Ovary (tissue), 10 donors: ENCODE measurements at regions of chr6 and their contacts with region 1.

Region 1: DNA sequence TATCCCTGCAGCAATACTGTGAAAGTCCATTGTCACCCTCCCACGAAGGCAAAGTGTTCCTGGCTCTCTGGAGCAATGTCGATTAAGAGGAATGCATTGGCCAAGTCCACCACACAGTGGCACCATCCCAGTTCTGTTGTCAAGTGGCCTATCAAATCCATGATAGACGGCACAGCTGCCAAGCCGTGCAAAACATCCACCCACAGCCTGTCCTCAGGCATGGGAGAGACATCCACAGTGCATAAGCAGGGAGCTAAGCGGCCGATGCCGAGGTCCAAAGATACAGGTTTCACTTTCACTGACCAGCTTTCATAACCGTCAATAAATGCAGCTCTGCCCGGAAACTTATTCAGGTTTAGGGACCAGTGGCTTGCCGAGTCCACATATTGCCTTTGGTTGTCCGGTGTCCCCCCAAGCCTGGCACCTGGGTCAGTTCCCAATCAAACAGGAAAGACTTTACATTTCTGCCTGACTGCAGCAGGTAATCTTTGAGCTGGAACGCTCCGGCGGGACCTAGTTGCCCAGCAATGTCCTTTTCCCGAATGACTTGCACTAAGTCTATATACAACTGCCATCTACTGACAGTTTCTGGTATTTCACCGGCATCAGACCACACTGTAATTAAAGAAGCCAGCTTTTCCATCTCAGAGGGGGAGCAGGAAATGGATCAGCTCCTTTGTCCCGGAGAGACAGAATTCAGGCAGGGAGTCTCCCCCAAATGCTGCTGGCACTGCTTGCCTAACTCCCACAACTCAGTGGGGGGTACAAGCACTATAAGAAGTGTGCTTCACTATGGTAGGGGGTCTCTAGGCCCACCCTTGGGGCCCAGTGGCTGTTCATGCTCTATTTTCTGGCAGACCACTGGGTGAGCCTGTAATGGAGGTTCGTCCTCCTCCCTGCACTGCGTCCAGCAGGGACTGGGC is 6.3 kb downstream of the ZKSCAN3 start:
- DNase-seq: peak; percentile 70 to 80 (median 72)
- H3K4me3 ChIP-seq: peak overlapping the region; percentile 56
- H3K27ac ChIP-seq: peak overlapping the region; percentile 26 to 75
- H3K4me1 ChIP-seq: peaks cover 4% of the 10 kb centered on the region
- H3K27me3 ChIP-seq: no peaks in the 10 kb centered on the region
- CTCF ChIP-seq: peak; percentile 73 to 82 (median 80)
- EP300 ChIP-seq: no peak
- POLR2A ChIP-seq: no peak

Region 2: GRCh38 chr6:28136585-28137504 is 219.2 kb before region 1 on chr6:
- intact Hi-C with region 1: loop called in 3 of 4 experiments (anchors 10 kb)
- DNase-seq: peak; percentile 93 to 96 (median 95)
- H3K4me3 ChIP-seq: peak overlapping the region; percentile 74
- H3K27ac ChIP-seq: peak overlapping the region; percentile 94 to 95
- H3K4me1 ChIP-seq: peaks cover 7% of the 10 kb centered on the region
- H3K27me3 ChIP-seq: no peaks in the 10 kb centered on the region
- CTCF ChIP-seq: no peak
- EP300 ChIP-seq: no peak
- POLR2A ChIP-seq: peak; percentile 29

Region 3: GRCh38 chr6:28225056-28225834 is 130.8 kb before region 1 on chr6 and contains the start of gene ZSCAN9:
- intact Hi-C with region 1: loop called in 1 of 4 experiments (anchors 5 kb)
- DNase-seq: peak; percentile 83 to 92 (median 85)
- H3K4me3 ChIP-seq: peak within 1 kb of the TSS; percentile 89
- H3K27ac ChIP-seq: peak within 1 kb of the TSS in 1 of 2 donors; percentile 33
- H3K4me1 ChIP-seq: peaks cover 1% of the 10 kb centered on the region
- H3K27me3 ChIP-seq: no peaks in the 10 kb centered on the region
- CTCF ChIP-seq: no peak
- EP300 ChIP-seq: no peak
- POLR2A ChIP-seq: peak; percentile 20
- total RNA-seq, gene ZSCAN9: 10.0 to 17.5 (median 13.7) TPM

Region 4: GRCh38 chr6:28252009-28252975 is 103.7 kb before region 1 on chr6 and contains the start of gene ZKSCAN4:
- intact Hi-C with region 1: loop called in 2 of 4 experiments (anchors 10 kb)
- DNase-seq: peak; percentile 70 to 83 (median 76)
- H3K4me3 ChIP-seq: peak within 1 kb of the TSS; percentile 74
- H3K27ac ChIP-seq: no peak within 1 kb of the TSS
- H3K4me1 ChIP-seq: peaks cover 8% of the 10 kb centered on the region
- H3K27me3 ChIP-seq: no peaks in the 10 kb centered on the region
- CTCF ChIP-seq: no peak
- EP300 ChIP-seq: no peak
- POLR2A ChIP-seq: no peak
- total RNA-seq, gene ZKSCAN4: 1.5 to 8.0 (median 6.0) TPM

Region 5: GRCh38 chr6:28266962-28267694 is 88.9 kb before region 1 on chr6 and contains the start of gene ZSCAN26:
- intact Hi-C with region 1: loop called in 1 of 4 experiments (anchors 10 kb)
- DNase-seq: peak; percentile 81 to 92 (median 86)
- H3K4me3 ChIP-seq: peak within 1 kb of the TSS; percentile 86
- H3K27ac ChIP-seq: peak within 1 kb of the TSS; percentile 77
- H3K4me1 ChIP-seq: peaks cover 1% of the 10 kb centered on the region
- H3K27me3 ChIP-seq: no peaks in the 10 kb centered on the region
- CTCF ChIP-seq: no peak
- EP300 ChIP-seq: no peak
- POLR2A ChIP-seq: peak; percentile 37
- total RNA-seq, gene ZSCAN26: 11.8 to 32.0 (median 23.1) TPM